Heart left ventricle (tissue), 16 donors: ENCODE measurements at regions of chr12 and their contacts with region 1.

Region 1: GRCh38 chr12:96383991-96384390 is 16.2 kb downstream of the CDK17 start:
- DNase-seq: no peak
- ATAC-seq: no peak
- H3K4me3 ChIP-seq: no peak overlapping the region
- H3K27ac ChIP-seq: no peak overlapping the region
- H3K4me1 ChIP-seq: peaks cover 0 to 79% (median 8%) of the 10 kb centered on the region in 12 donors
- H3K27me3 ChIP-seq: no peaks in the 10 kb centered on the region
- CTCF ChIP-seq: no peak
- POLR2A ChIP-seq: no peak

Region 2: GRCh38 chr12:96335270-96335669 is 48.7 kb before region 1 on chr12:
- intact Hi-C with region 1: loop called in 1 of 10 experiments (anchors 10 kb)
- DNase-seq: no peak
- ATAC-seq: no peak
- H3K4me3 ChIP-seq: no peak overlapping the region
- H3K27ac ChIP-seq: no peak overlapping the region
- H3K4me1 ChIP-seq: peaks cover 0 to 22% (median 3%) of the 10 kb centered on the region in 12 donors
- H3K27me3 ChIP-seq: no peaks in the 10 kb centered on the region
- CTCF ChIP-seq: no peak
- POLR2A ChIP-seq: no peak